ENCODE measurements at regions of chr2 and their contacts with region 1.

Region 1: GRCh38 chr2:128187032-128187654 is 96.1 kb downstream of the UGGT1 start:
- DNase-seq: no peak
- ATAC-seq: no peak
- H3K4me3 Mint-ChIP-seq: no peak overlapping the region
- H3K27ac Mint-ChIP-seq: no peak overlapping the region
- H3K4me1 Mint-ChIP-seq: no peaks in the 10 kb centered on the region
- H3K27me3 Mint-ChIP-seq: no peaks in the 10 kb centered on the region
- CTCF ChIP-seq: no peak

Region 2: GRCh38 chr2:128090575-128090944 is 96.6 kb before region 1 on chr2:
- CTCF ChIA-PET with region 1: no interaction called
- POLR2A ChIA-PET with region 1: no interaction called
- intact Hi-C with region 1: no loop called
- DNase-seq: no peak
- ATAC-seq: no peak
- H3K4me3 Mint-ChIP-seq: peak overlapping the region; percentile 88
- H3K27ac Mint-ChIP-seq: peak overlapping the region; percentile 93
- H3K4me1 Mint-ChIP-seq: peaks cover 37% of the 10 kb centered on the region
- H3K27me3 Mint-ChIP-seq: peaks cover 3% of the 10 kb centered on the region
- CTCF ChIP-seq: no peak

Region 3: DNA sequence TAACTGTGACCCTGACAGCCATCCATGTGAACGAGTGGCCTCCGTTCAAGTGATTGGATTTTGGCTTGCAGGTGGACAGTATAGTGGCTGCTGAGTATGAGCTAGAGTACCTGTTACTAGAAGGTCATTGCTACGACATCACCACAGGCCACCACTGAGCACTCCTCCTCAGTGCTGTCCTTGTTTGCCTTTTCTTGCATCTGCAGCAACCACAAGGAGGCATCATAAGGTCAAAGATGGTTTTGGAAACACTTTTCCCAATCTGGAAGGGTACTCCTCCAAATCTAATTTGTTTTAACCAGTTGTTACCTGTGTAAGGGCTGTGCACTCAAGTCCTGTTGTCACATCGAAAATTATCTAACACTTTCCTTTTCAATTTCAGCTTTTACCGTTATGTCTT is 15.0 kb before region 1 on chr2:
- CTCF ChIA-PET with region 1: no interaction called
- POLR2A ChIA-PET with region 1: no interaction called
- intact Hi-C with region 1: no loop called
- DNase-seq: no peak
- ATAC-seq: no peak
- H3K4me3 Mint-ChIP-seq: no peak overlapping the region
- H3K27ac Mint-ChIP-seq: no peak overlapping the region
- H3K4me1 Mint-ChIP-seq: peaks cover 5% of the 10 kb centered on the region
- H3K27me3 Mint-ChIP-seq: no peaks in the 10 kb centered on the region
- CTCF ChIP-seq: no peak

Region 4: DNA sequence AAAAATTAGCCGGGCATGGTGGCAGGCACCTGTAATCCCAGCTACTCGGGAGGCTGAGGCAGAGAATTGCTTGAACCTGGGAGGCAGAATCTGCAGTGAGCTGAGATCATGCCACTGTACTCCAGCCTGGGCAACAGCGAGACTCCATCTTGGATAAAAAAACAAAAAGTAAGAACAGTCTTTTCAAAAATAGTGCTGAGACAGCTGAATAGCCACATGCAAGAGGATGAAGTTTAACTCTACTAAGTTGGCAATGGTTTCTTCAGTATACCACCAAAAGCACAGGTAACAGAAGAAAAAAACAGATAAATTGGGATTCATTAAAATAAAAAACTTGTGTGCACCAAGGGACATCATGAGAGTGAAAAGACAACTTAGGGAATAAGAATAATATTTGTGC is 19.1 kb after region 1 on chr2:
- CTCF ChIA-PET with region 1: no interaction called
- POLR2A ChIA-PET with region 1: no interaction called
- intact Hi-C with region 1: loop called (anchors 1 kb)
- DNase-seq: no peak
- ATAC-seq: no peak
- H3K4me3 Mint-ChIP-seq: no peak overlapping the region
- H3K27ac Mint-ChIP-seq: no peak overlapping the region
- H3K4me1 Mint-ChIP-seq: no peaks in the 10 kb centered on the region
- H3K27me3 Mint-ChIP-seq: no peaks in the 10 kb centered on the region
- CTCF ChIP-seq: no peak

Region 5: DNA sequence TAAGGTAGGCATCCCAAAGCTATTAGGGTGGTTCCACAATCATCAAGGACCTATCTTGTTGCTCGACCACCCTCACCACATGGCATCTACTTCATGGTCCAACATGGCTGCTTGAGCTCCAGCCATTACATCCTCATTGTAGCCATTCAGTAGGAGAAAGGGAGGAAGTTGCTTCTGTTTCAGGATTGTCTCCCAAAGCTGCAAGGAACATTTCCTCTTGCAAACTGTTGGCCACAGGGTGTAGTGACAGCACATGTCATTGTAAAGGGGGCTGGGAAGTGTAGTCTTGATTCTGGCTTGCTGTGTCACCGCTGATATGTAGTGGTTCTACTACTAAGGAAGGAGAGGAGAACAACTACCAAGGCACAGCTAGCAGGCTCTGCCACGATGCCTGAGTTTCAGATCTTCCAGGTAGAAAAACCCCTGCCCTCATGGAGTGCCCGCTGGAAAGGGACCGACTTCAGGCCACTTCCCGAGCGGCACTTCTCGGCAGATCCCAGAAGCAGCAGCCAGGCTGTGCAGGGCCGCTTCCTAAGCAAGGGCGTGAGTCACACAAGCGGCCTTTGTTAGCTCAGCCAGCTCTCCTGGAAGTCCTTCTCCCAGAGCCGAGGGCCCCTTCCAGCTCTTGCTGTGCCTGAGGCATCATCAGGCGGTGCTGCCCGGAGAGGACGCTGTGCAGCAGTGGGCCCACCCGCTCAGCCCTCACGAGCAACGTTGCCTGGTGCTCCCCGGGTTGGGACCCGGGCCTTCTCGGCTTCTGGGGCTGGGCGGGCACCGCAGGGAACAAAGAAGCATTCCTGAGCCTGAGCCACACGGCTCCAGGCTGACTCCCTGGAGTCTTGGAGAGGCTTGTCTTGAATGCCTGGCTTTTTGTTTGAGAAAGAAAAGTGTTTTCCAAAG is 73.3 kb after region 1 on chr2:
- CTCF ChIA-PET with region 1: no interaction called
- POLR2A ChIA-PET with region 1: no interaction called
- intact Hi-C with region 1: no loop called
- DNase-seq: no peak
- ATAC-seq: no peak
- H3K4me3 Mint-ChIP-seq: no peak overlapping the region
- H3K27ac Mint-ChIP-seq: no peak overlapping the region
- H3K4me1 Mint-ChIP-seq: peaks cover 2% of the 10 kb centered on the region
- H3K27me3 Mint-ChIP-seq: no peaks in the 10 kb centered on the region
- CTCF ChIP-seq: no peak

Region 6: DNA sequence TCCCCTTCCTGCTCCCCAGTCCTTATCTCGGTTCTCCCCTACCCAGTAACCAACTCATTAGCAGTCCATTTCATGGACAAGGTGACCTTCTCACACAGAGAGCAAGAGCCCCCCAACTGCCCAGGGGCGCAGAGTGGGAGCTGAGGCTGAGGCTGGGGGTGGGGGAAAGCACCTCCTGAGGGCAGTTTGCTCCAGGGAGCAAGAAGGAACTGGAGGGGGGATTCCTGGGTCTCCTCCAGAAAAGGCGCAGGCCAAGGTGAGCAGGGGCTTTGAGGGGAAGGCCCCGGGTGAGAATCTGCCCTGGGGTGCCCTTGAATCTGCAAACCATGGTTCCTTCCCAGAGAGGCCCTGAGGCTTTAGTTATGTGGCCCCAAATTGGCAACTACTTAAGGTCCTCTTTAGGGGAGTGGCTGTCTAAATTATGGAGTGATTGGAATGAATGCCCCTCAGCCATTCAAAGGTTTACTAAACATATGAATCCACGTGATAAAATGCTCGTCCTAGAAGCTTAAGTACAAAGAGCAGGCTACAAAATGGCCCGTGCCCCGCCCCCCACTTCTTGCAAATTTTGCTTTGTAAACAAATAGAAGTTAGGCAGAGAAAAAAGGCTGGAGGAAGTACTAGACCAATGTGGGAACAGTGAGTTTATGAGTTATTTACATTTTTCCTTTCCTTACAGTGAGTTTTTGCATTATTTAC is 255.1 kb after region 1 on chr2:
- CTCF ChIA-PET with region 1: no interaction called
- POLR2A ChIA-PET with region 1: no interaction called
- intact Hi-C with region 1: no loop called
- DNase-seq: no peak
- ATAC-seq: no peak
- H3K4me3 Mint-ChIP-seq: no peak overlapping the region
- H3K27ac Mint-ChIP-seq: no peak overlapping the region
- H3K4me1 Mint-ChIP-seq: no peaks in the 10 kb centered on the region
- H3K27me3 Mint-ChIP-seq: peaks cover 9% of the 10 kb centered on the region
- CTCF ChIP-seq: no peak